ENCODE measurements at regions of chr12 and their contacts with region 1.

Region 1: GRCh38 chr12:45234139-45234846 is 18.4 kb downstream of the ANO6 start:
- DNase-seq: no peak
- ATAC-seq: peak; percentile 89
- H3K4me3 ChIP-seq: peak overlapping the region; percentile 3 to 11
- H3K27ac ChIP-seq: peak overlapping the region; percentile 100
- H3K4me1 ChIP-seq: peaks cover 10 to 12% of the 10 kb centered on the region in 2 donors
- H3K27me3 ChIP-seq: no peaks in the 10 kb centered on the region

Region 2: GRCh38 chr12:45060976-45061375 is 173.3 kb before region 1 on chr12:
- intact Hi-C with region 1: no loop called
- DNase-seq: no peak
- ATAC-seq: no peak
- H3K4me3 ChIP-seq: no peak overlapping the region
- H3K27ac ChIP-seq: no peak overlapping the region
- H3K4me1 ChIP-seq: no peaks in the 10 kb centered on the region
- H3K27me3 ChIP-seq: no peaks in the 10 kb centered on the region

Region 3: DNA sequence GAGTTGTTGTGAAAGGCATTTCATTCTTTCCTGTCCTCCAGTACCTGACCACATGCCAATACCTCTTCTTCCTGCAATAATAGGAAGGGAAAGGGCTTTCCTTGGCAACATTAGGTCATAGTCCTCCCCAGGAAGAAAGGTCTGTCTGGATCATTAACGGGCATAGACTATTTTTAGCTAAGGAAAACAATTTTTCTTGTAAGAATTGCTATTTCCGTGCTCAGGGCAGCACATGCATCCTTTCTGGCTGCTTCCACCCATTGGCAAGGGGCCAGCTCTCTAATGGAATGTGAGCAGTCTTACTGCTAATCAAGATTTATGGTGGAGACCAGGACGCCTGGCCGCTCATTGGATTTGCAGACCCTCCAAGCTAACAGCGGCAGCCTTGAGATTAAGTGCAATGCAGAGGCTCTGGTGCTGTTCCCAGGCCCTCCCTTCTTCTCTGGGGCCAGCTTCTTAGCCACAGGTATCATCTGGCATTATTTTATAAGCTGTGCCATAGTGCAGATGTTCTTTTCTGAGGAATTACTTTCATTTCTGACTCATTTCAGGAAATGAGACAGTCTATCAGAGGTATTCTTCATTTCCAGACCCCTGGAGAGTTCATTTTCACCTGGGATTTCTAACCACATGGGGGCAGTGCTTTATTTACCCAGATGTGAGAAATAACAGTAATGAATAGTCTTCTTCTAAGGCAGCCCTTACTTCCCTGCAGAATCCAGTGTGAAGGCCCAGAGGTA is 34.5 kb after region 1 on chr12:
- intact Hi-C with region 1: loop called (anchors 2 to 5 kb)
- DNase-seq: peak; percentile 94 to 95
- ATAC-seq: peak; percentile 74
- H3K4me3 ChIP-seq: no peak overlapping the region
- H3K27ac ChIP-seq: peak overlapping the region; percentile 80 to 82
- H3K4me1 ChIP-seq: peaks cover 4 to 24% of the 10 kb centered on the region in 2 donors
- H3K27me3 ChIP-seq: no peaks in the 10 kb centered on the region

Region 4: GRCh38 chr12:45284131-45284901 is 50.0 kb after region 1 on chr12:
- intact Hi-C with region 1: no loop called
- DNase-seq: no peak
- ATAC-seq: no peak
- H3K4me3 ChIP-seq: no peak overlapping the region
- H3K27ac ChIP-seq: peak overlapping the region in 1 of 2 donors; percentile 76
- H3K4me1 ChIP-seq: peaks cover 8 to 17% of the 10 kb centered on the region in 2 donors
- H3K27me3 ChIP-seq: no peaks in the 10 kb centered on the region

Region 5: GRCh38 chr12:45298716-45299692 is 64.7 kb after region 1 on chr12:
- intact Hi-C with region 1: loop called in 1 of 2 experiments (anchors 1 kb)
- DNase-seq: peak in 1 of 2 donors; percentile 57
- ATAC-seq: no peak
- H3K4me3 ChIP-seq: no peak overlapping the region
- H3K27ac ChIP-seq: peak overlapping the region in 1 of 2 donors; percentile 59
- H3K4me1 ChIP-seq: peaks cover 3 to 16% of the 10 kb centered on the region in 2 donors
- H3K27me3 ChIP-seq: no peaks in the 10 kb centered on the region